ENCODE measurements at regions of chr5 and their contacts with region 1.

Region 1: DNA sequence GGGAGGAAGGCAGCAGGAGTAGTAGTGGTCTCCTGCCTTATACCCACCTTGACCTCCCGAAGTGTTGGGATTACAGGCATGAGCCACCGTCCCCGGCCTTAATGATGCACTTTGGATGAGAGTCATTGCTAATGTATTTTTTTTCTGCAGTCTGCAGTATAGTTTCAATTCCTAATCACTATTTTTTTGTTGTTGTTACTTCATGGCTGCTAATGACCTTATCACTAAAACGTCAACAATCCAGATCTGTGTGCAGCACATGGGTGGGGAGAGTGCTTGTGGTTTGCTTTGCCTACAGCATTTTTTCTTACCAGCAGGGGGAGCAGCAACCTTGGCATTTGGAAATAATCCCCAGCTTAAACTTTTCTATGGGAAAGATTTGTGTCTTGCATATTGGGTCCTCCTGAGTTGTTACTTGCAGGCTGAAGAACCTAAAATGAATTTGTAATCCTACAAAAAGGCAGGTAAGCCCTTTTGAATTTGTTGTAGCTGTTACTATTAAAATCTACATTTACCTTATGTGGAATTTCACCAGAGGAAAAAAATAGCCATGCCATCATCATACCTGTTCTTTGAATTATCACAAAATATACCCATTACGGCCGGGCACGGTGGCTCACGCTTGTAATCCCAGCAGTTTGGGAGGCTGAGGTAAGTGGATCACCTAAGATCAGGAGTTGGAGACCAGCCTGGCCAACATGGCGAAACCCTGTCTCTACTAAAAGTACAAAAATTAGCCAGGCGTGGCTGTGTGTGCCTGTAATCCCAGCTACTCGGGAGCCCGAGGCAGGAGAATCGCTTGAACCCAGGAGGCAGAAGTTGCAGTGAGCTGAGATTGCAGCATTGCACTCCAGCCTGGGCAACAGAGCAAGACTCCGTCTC is 6.3 kb upstream of the MED7 start:
- DNase-seq: peak; percentile 90
- ATAC-seq: peak; percentile 75
- H3K4me3 Mint-ChIP-seq: no peak overlapping the region
- H3K27ac Mint-ChIP-seq: no peak overlapping the region
- H3K4me1 Mint-ChIP-seq: peaks cover 54% of the 10 kb centered on the region
- H3K27me3 Mint-ChIP-seq: no peaks in the 10 kb centered on the region

Region 2: DNA sequence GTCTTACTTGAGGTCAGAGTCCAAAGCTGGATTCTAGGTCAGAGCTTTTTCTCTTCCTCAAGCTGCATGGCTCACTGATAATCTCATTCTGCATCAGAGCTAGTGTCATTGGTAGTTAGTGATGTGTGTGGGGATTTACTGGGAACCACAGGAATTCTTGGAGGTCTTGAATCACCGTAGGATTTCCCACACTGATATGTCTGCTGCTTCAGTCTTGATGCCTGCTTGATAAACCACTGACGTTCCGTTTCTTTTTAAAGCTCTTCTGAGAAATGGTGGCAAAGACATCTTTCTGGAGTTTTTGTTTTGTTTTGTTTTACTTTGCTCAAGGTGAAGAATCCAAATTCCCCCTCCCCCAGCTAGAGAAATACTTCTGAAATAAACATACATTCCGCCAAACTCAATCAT is 18.2 kb after region 1 on chr5:
- CTCF ChIA-PET with region 1: interaction called, 28 read pairs
- POLR2A ChIA-PET with region 1: interaction called, 24 read pairs
- DNase-seq: peak; percentile 26
- ATAC-seq: peak; percentile 45
- H3K4me3 Mint-ChIP-seq: peak overlapping the region; percentile 69
- H3K27ac Mint-ChIP-seq: peak overlapping the region; percentile 85
- H3K4me1 Mint-ChIP-seq: peaks cover 67% of the 10 kb centered on the region
- H3K27me3 Mint-ChIP-seq: no peaks in the 10 kb centered on the region

Region 3: GRCh38 chr5:157180374-157181264 is 31.6 kb after region 1 on chr5 and contains the start of gene ITK:
- CTCF ChIA-PET with region 1: interaction called, 162 read pairs
- POLR2A ChIA-PET with region 1: interaction called, 106 read pairs
- DNase-seq: peak; percentile 80
- ATAC-seq: peak; percentile 80
- H3K4me3 Mint-ChIP-seq: peak within 1 kb of the TSS; percentile 99
- H3K27ac Mint-ChIP-seq: peak within 1 kb of the TSS; percentile 98
- H3K4me1 Mint-ChIP-seq: peaks cover 47% of the 10 kb centered on the region
- H3K27me3 Mint-ChIP-seq: no peaks in the 10 kb centered on the region
- total RNA-seq, gene ITK: 254 to 263 TPM

Region 4: GRCh38 chr5:157219491-157220271 is 70.7 kb after region 1 on chr5:
- CTCF ChIA-PET with region 1: interaction called, 24 read pairs
- POLR2A ChIA-PET with region 1: interaction called, 18 read pairs
- DNase-seq: peak; percentile 21
- ATAC-seq: no peak
- H3K4me3 Mint-ChIP-seq: peak overlapping the region; percentile 39
- H3K27ac Mint-ChIP-seq: peak overlapping the region; percentile 90
- H3K4me1 Mint-ChIP-seq: peaks cover 94% of the 10 kb centered on the region
- H3K27me3 Mint-ChIP-seq: no peaks in the 10 kb centered on the region

Region 5: GRCh38 chr5:157253547-157253946 is 104.6 kb after region 1 on chr5:
- CTCF ChIA-PET with region 1: interaction called, 19 read pairs
- POLR2A ChIA-PET with region 1: interaction called, 8 read pairs
- DNase-seq: no peak
- ATAC-seq: no peak
- H3K4me3 Mint-ChIP-seq: peak overlapping the region; percentile 54
- H3K27ac Mint-ChIP-seq: peak overlapping the region; percentile 94
- H3K4me1 Mint-ChIP-seq: peaks cover 95% of the 10 kb centered on the region
- H3K27me3 Mint-ChIP-seq: no peaks in the 10 kb centered on the region

Region 6: GRCh38 chr5:157271740-157272271 is 122.8 kb after region 1 on chr5:
- CTCF ChIA-PET with region 1: interaction called, 23 read pairs
- POLR2A ChIA-PET with region 1: interaction called, 29 read pairs
- DNase-seq: peak; percentile 97
- ATAC-seq: peak; percentile 87
- H3K4me3 Mint-ChIP-seq: peak overlapping the region; percentile 79
- H3K27ac Mint-ChIP-seq: peak overlapping the region; percentile 95
- H3K4me1 Mint-ChIP-seq: peaks cover 78% of the 10 kb centered on the region
- H3K27me3 Mint-ChIP-seq: no peaks in the 10 kb centered on the region

Region 7: DNA sequence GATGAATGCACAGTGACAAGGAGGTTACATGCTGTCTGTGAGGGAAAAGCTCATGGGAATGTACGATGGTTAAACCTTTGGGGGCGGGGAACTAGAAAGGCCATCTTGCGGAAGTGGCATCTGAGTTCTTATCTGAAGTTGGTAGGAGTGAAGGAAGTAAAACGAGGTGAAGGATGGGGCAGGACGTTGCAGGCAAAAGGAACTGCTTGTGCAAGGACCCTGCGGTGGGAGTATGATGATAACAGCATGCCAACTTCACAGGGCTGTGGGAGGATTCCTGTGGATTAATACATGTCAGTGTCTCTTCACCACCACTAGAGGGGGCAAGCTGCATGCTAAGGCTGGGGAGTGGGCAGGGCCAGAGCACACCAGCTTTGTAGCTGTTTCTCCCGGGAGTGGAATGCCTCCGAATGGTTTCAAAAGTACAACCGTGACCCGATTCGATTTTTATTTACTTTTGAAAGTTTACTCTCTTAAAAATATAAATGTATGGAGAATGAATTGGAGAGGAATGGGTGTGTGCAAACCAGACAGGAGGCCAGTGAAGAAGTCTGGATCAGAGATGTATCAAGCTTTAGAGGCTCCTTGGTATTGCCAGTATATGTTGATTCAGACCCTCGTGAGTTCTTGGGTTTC is 179.4 kb after region 1 on chr5:
- CTCF ChIA-PET with region 1: interaction called, 13 read pairs
- POLR2A ChIA-PET with region 1: no interaction called
- DNase-seq: peak; percentile 68
- ATAC-seq: peak; percentile 96
- H3K4me3 Mint-ChIP-seq: no peak overlapping the region
- H3K27ac Mint-ChIP-seq: peak overlapping the region; percentile 77
- H3K4me1 Mint-ChIP-seq: peaks cover 25% of the 10 kb centered on the region
- H3K27me3 Mint-ChIP-seq: no peaks in the 10 kb centered on the region

Region 8: GRCh38 chr5:157366741-157367674 is 218.0 kb after region 1 on chr5:
- CTCF ChIA-PET with region 1: no interaction called
- POLR2A ChIA-PET with region 1: no interaction called
- DNase-seq: no peak
- ATAC-seq: no peak
- H3K4me3 Mint-ChIP-seq: no peak overlapping the region
- H3K27ac Mint-ChIP-seq: peak overlapping the region; percentile 13
- H3K4me1 Mint-ChIP-seq: no peaks in the 10 kb centered on the region
- H3K27me3 Mint-ChIP-seq: no peaks in the 10 kb centered on the region

Region 9: GRCh38 chr5:157511651-157512644 is 363.0 kb after region 1 on chr5:
- CTCF ChIA-PET with region 1: no interaction called
- POLR2A ChIA-PET with region 1: no interaction called
- DNase-seq: no peak
- ATAC-seq: no peak
- H3K4me3 Mint-ChIP-seq: no peak overlapping the region
- H3K27ac Mint-ChIP-seq: no peak overlapping the region
- H3K4me1 Mint-ChIP-seq: peaks cover 4% of the 10 kb centered on the region
- H3K27me3 Mint-ChIP-seq: no peaks in the 10 kb centered on the region

Measured in activated CD8-positive, alpha-beta T cell treated with anti-CD3 and anti-CD28 coated beads, Interleukin-2, amount 10 ng/mL, durations not matched to agents 7 days and 5 days (primary cell).